ENCODE measurements at regions of chr16 and their contacts with region 1.

Region 1: DNA sequence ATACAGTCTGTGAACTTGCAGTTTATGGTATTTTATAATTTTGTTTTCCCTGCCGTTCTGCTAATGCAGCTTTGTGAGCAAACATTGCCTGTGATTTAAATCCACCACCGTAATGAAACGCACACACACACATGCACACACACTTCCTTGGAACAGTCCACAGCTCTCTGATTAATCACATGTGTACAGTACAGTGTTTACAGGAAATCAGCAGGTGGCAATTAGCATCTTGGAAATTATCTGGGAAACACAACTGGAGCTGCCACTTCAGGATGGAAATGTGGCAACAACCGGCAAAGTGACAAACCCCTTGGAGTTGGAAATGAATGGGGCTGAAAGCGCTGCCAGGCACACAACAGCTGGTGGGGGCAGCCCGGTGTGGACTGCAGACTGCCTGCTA is 12.9 kb upstream of the ZKSCAN2 start:
- DNase-seq: no peak
- CTCF ChIP-seq: no peak

Region 2: DNA sequence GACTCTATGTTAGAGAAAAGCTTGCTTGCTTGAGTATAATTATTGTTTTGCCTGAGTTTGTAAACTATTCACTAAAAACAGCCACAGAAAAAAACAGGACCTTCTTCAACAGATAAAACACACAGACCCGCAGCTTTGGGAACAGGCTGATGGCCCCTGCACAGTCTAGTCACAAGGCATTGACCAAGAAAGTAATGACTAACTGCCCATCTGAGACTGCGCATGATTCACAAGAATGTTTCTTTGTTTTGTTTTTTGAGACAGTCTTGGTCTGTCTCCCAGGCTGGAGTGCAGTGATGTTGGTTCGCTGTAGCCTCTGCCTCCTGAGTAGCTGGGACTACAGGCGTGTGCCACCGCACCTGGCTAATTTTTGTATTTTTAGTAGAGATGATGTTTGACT is 10.2 kb before region 1 on chr16:
- CTCF ChIA-PET with region 1: interaction called, 11 read pairs
- POLR2A ChIA-PET with region 1: no interaction called
- DNase-seq: no peak
- CTCF ChIP-seq: no peak

Region 3: DNA sequence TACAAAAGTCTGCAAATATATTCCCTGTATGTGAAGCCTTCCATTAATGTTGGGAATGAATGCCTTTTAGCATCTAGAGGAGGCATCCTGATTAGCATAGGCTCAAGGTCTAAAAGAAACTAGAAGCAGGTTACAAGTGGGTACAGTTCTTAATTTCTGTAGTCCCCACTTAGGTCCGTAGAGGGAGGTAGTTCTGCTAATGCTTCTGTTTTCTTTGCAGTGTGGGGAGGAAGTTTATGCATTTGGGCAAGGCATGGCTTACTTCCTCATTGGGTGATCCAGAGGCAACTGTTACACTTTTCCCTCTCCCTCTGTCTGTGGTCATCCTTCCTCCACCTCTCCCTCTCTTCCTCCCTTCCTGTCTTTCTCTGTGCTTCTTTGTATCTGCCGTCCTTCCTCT is 95.5 kb after region 1 on chr16:
- CTCF ChIA-PET with region 1: no interaction called
- POLR2A ChIA-PET with region 1: no interaction called
- DNase-seq: no peak
- CTCF ChIP-seq: no peak

Measured in GM10248 (cell line).